Activated CD4-positive, alpha-beta T cell treated with anti-CD3 and anti-CD28 coated beads for 36 hours (primary cell): ENCODE measurements at regions of chr5 and their contacts with region 1.

Region 1: DNA sequence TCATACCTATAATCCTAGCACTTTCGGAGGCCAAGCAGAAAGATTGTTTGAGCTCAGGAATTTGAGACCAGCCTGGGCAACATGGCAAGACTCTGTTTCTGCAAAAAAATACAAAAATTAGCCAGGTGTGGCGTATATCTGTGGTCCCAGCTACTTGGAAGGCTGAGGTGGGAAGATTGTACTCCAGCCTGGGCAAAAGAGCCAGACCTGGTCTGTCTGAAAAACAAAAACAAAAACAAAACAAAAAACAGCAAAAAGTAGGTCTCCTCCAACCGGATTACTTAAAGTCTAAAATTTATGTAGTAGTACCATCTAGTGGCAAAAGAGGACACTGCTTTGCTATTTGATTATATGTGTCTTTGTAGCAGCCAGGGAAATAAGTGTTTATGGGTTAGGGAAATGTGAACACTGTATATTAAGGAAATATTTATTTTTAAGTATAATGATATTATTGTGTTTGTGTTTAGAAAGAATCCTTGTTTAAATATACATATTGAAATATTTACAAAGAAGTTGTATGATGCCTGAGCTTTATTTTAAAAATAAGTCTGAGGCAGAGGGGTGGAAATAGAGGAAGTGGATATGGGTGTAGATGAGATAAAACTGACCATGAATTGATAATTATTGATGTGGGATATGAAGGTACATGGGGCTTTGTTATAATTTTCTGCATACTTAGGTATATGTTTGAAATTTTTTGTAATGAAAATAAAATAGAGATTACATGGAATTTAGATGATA is 20.0 kb downstream of the APC start:
- DNase-seq: no peak
- ATAC-seq: peak; percentile 74
- H3K4me3 Mint-ChIP-seq: no peak overlapping the region
- H3K27ac Mint-ChIP-seq: peak overlapping the region; percentile 51
- H3K4me1 Mint-ChIP-seq: peaks cover 2% of the 10 kb centered on the region
- H3K27me3 Mint-ChIP-seq: no peaks in the 10 kb centered on the region

Region 2: DNA sequence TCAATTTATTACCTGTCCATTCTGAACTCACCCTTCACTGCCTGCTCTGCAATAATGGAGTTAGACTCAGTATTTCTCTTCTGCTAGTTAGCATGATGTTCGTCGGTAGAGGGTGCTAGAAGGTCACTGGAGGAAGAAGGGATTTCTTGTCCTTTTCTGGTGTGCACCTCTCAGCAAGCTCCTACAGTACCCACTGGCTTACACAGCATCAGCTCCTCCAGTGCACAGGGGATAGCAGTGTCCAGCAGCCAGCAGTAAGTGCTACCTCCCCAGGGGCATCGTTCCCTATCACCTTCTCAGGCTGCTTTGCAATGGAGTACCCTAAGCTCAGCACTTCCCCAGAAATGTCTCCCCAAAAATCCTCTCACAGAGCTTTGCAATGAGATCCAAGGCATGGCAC is 65.9 kb before region 1 on chr5:
- CTCF ChIA-PET with region 1: interaction called, 81 read pairs
- POLR2A ChIA-PET with region 1: no interaction called
- intact Hi-C with region 1: loop called (anchors 1 to 2 kb)
- DNase-seq: peak; percentile 52
- ATAC-seq: peak; percentile 68
- H3K4me3 Mint-ChIP-seq: no peak overlapping the region
- H3K27ac Mint-ChIP-seq: no peak overlapping the region
- H3K4me1 Mint-ChIP-seq: no peaks in the 10 kb centered on the region
- H3K27me3 Mint-ChIP-seq: peaks cover 29% of the 10 kb centered on the region

Region 3: GRCh38 chr5:112958093-112959088 is 200.8 kb after region 1 on chr5:
- CTCF ChIA-PET with region 1: no interaction called
- POLR2A ChIA-PET with region 1: no interaction called
- intact Hi-C with region 1: no loop called
- DNase-seq: peak; percentile 60
- ATAC-seq: peak; percentile 91
- H3K4me3 Mint-ChIP-seq: no peak overlapping the region
- H3K27ac Mint-ChIP-seq: no peak overlapping the region
- H3K4me1 Mint-ChIP-seq: peaks cover 36% of the 10 kb centered on the region
- H3K27me3 Mint-ChIP-seq: no peaks in the 10 kb centered on the region